ENCODE measurements at regions of chr19 and their contacts with region 1.

Region 1: DNA sequence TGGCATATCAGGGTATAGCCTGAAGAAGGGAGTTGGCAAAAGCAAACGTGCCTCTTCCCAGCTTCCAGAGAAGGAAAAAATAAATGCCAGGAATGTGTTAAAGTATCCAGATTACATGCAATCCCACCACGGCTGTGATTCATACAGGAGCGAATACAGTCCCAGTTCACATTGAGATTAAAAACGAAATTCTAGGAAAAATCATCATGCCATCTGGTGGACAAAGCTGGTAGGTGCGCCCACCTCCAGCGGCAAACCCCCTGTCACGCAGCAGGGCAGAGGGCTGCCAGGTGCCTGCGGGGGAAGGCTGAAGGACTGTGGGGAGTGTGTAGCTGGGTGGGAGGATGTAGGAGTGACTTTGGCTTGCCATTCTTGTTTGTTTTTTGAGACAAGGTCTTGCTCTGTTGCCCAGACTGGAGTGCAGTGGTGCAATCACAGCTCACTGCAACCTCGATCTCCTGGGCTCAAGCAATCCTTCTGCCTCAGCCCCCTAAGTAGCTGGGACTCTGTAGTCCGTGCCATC is 6.4 kb upstream of the DMWD start:
- DNase-seq: peak; percentile 61
- H3K4me3 ChIP-seq: no peak overlapping the region
- H3K27ac ChIP-seq: no peak overlapping the region
- H3K27me3 ChIP-seq: no peaks in the 10 kb centered on the region
- CTCF ChIP-seq: peak; percentile 79

Region 2: GRCh38 chr19:45097776-45098520 is 701.1 kb before region 1 on chr19:
- CTCF ChIA-PET with region 1: no interaction called
- POLR2A ChIA-PET with region 1: no interaction called
- DNase-seq: peak; percentile 82
- H3K4me3 ChIP-seq: peak overlapping the region; percentile 44
- H3K27ac ChIP-seq: peak overlapping the region; percentile 92
- H3K27me3 ChIP-seq: no peaks in the 10 kb centered on the region
- CTCF ChIP-seq: no peak

Region 3: DNA sequence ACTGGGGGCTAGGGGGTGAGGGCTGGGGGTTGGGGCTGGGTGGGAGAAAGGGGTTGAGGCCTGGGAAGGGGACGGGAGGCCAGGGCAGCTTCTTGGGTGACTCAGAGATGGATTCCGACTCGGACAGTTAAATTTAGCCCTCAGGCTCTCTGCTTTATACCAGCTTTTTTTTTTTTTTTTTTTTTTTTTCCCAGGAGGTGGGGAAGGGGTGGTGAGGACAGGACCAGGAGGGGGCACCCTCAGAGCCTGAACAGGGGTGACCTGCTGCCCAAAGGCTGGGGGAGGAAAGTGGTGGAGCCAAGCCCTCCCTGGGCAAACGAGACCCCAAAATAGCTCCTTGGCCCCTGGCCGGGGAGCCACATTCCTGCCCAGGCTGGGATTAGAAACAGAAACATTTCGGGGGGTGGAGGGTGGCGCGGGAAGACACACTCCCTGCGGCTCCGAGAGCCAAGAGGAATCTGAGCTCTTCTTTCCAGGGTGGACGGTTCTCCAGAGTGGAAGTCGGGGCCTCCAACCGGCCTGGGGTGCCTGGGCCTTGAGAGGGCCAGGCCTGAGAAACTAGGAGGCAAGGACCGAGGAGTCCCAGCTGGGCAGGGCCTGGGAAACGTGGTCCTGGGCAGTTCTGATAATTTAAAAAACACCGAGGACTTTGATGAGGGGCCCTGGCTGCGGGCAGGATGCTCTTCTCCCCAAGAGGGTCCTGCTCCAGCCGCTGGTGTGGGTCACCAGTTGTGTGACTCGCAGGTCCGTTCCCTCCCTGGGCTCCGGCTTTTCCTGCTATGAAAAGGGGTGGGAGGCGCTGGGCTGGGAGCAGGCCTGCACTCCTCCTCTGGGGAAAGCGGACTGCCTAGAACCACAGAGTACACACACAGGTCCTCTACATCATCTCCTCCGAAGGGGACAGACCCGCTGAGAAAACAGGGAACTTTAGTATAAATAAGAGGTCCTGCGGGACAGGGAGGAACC is 16.0 kb before region 1 on chr19:
- CTCF ChIA-PET with region 1: interaction called, 20 read pairs
- POLR2A ChIA-PET with region 1: interaction called, 11 read pairs
- DNase-seq: no peak
- H3K4me3 ChIP-seq: peak overlapping the region; percentile 62
- H3K27ac ChIP-seq: peak overlapping the region; percentile 94
- H3K27me3 ChIP-seq: no peaks in the 10 kb centered on the region
- CTCF ChIP-seq: 0 out of 2 replicates have a peak, but pooled peaks have one; percentile 11

Region 4: DNA sequence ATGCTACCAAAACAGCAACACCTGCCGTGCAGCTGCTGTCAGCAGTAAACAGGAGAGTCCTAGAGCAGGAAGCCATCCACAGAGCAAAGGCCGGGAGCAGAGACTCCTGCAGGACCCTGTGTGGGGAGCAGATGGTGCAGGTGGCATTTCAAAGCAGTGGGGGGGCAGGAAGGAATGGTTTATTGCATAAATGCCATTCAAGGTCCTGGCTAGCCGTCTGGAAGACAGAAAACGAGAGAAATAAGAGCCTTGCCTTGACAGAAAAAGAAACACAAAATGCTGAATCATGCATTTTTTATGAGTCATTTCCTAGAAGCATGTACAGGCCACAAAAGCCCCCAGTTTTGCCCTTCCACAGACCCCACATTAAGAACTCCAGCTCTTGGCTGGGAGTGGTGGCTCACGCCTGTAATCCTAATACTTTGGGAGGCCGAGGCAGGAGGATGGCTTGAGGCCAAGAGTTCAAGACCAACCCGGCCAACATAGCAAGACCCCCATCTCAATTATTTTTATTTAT is 10.6 kb after region 1 on chr19:
- CTCF ChIA-PET with region 1: interaction called, 13 read pairs
- POLR2A ChIA-PET with region 1: interaction called, 7 read pairs
- DNase-seq: peak; percentile 52
- H3K4me3 ChIP-seq: no peak overlapping the region
- H3K27ac ChIP-seq: peak overlapping the region; percentile 95
- H3K27me3 ChIP-seq: no peaks in the 10 kb centered on the region
- CTCF ChIP-seq: no peak

Measured in AG04450 (cell line).